ENCODE measurements at regions of chr2 and their contacts with region 1.

Region 1: DNA sequence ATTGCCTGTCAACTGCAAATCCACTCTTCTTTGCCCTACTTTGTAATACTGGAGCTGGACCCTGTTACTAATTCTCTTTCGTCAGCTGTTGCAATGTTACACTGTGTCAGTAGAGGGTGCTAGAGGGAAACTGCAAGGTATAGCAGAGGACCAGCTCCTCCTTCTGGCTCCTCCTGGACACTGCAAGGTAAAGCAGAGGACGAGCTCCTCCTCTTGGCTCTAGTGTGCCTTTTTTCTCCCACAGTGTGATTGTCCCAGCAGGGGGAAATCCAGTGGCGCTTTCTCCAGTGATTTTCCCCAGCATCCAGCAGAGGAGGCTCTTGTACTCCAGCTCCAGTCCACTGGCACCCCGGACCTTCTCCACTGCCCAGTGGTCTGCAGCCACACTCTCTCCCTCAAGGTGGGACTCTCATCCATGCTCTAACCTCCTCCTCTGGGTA is 95.6 kb downstream of the CAPN13 start:
- DNase-seq: peak; percentile 66
- H3K27ac ChIP-seq: no peak overlapping the region
- CTCF ChIP-seq: peak; percentile 93

Region 2: DNA sequence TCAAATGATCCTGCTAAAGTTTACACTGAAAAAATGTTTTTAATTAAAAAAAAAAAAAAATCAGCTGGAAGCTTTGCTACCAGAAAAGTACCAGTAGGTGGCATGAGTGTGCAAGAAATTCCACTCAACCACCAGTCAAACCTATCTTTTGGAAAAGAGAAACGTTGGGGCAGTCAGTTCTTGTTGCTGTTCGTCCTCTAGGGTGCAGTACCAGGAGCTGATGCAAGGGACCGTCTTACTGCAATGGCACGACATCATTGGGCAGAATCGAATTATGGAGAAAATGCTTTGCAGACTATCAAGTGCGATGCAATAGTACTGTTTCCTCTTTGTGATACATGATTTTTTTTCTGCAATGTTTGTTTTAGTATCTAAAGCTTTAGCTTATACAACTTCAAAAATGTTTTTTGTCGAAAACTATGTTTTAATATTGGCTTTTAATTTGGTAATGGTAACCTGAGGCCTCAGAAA is 546.6 kb before region 1 on chr2:
- CTCF ChIA-PET with region 1: interaction called, 40 read pairs
- POLR2A ChIA-PET with region 1: no interaction called
- DNase-seq: peak; percentile 86
- H3K27ac ChIP-seq: no peak overlapping the region
- CTCF ChIP-seq: peak; percentile 87

Region 3: GRCh38 chr2:30208452-30208851 is 503.2 kb before region 1 on chr2:
- CTCF ChIA-PET with region 1: interaction called, 24 read pairs
- POLR2A ChIA-PET with region 1: no interaction called
- DNase-seq: peak; percentile 64
- H3K27ac ChIP-seq: no peak overlapping the region
- CTCF ChIP-seq: peak; percentile 87

Region 4: DNA sequence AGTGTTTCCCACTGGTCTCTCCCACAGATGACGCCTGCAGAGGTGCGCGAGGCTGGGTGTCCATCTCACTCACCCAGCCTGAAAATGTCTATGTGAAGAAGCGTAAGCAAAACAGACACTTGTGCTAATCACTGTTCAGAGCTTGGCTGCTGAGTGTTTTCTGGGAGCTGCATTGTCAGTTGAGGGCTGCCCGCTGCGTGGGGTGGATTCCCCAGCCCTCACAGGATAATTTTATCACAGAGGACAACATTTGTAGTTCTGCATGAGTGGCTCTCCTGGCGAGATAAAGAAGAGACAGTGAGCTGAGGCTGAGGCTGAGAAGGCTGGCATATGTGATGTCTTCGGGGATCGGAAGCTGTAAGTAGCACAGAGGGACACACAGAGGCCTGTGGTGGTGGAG is 111.8 kb after region 1 on chr2:
- CTCF ChIA-PET with region 1: no interaction called
- POLR2A ChIA-PET with region 1: no interaction called
- DNase-seq: no peak
- H3K27ac ChIP-seq: no peak overlapping the region
- CTCF ChIP-seq: no peak

Region 5: DNA sequence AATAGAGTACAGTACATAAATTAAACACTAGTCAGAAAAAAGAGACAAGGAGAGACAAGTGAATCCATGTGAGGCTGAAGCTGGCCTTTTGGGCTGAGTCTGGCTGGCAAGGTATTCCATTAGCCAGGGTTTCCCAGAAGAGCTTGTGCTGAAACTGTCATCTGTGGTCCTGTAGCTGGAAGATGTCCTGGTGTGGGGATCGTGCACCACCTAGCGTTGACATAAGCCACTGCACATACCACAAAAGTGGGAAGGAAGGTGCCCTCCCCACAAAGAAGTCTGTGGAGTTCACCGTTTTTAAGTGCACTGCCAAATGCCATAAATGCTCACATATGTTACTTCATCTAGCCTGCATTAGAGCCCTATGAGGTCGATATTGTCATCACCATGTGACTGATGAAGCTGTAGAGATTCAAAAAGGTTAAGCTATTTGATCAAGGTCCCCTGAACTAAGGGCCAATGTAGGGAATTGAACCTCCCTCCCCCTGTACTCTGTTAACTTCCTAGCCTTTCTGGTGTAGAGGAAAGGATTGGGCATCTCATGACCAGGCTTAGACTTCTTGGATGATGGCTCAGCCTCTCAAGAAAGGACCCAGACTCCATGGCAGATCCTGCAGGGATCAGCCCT is 458.5 kb after region 1 on chr2:
- CTCF ChIA-PET with region 1: interaction called, 19 read pairs
- POLR2A ChIA-PET with region 1: interaction called, 4 read pairs
- DNase-seq: peak; percentile 81
- H3K27ac ChIP-seq: no peak overlapping the region
- CTCF ChIP-seq: peak; percentile 87